Aorta (tissue), 5 donors: ENCODE measurements at regions of chr21 and their contacts with region 1.

Region 1: GRCh38 chr21:37380349-37381323 is 14.1 kb downstream of the DYRK1A start:
- DNase-seq: no peak
- ATAC-seq: no peak
- H3K4me3 ChIP-seq: no peak overlapping the region
- H3K27ac ChIP-seq: no peak overlapping the region
- H3K4me1 ChIP-seq: peaks cover 10 to 20% of the 10 kb centered on the region in 2 donors
- H3K27me3 ChIP-seq: no peaks in the 10 kb centered on the region

Region 2: DNA sequence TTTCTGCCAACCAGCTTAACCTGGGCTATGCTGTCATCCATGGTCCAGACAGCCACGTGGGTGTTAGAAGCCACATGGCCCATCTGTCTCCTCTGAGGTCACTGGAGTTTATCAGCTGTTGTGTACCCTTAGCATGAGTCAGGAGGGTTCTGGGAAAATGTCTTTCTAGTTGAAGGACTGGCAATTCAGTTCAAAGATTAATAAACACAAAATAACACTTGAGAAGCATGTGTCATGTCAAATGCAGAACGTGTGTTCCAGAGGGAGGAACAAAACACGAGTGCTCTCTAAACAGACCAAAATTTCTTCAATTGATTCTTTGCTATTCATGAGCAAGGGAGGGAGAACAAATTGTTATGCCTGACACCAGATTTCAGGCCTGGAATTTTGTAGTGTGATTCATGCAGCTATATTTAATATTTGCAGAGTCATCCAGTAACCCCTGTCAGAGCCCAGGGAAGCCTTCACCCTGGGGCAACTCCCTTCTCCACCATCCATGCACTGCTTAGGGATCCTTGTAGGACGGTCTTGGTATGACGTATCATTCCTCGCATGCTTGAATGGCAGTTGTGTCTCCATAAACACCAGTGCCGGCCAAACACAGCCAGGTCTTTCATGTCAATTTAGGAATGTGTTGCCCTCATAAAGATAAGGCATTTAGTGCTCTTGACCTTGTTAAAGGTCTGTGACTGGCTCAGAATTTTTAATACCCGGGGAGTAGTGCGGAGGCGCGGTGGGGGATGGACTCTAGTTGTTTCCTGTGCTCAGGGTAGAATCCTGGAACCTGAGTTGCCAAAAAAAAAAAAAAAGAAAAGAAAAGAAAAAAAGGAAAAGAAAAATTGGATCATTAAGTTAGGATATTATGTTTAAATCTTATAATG is 41.7 kb before region 1 on chr21:
- intact Hi-C with region 1: no loop called
- DNase-seq: peak; percentile 59 to 79
- ATAC-seq: peak; percentile 87
- H3K4me3 ChIP-seq: no peak overlapping the region
- H3K27ac ChIP-seq: peak overlapping the region; percentile 91 to 97
- H3K4me1 ChIP-seq: no peaks in the 10 kb centered on the region
- H3K27me3 ChIP-seq: no peaks in the 10 kb centered on the region

Region 3: GRCh38 chr21:38888991-38889561 is 1508.4 kb after region 1 on chr21:
- intact Hi-C with region 1: loop called in 1 of 2 experiments (anchors 10 kb)
- DNase-seq: no peak
- ATAC-seq: peak; percentile 74
- H3K4me3 ChIP-seq: no peak overlapping the region
- H3K27ac ChIP-seq: no peak overlapping the region
- H3K4me1 ChIP-seq: no peaks in the 10 kb centered on the region
- H3K27me3 ChIP-seq: no peaks in the 10 kb centered on the region